ENCODE measurements at regions of chr3 and their contacts with region 1.

Region 1: DNA sequence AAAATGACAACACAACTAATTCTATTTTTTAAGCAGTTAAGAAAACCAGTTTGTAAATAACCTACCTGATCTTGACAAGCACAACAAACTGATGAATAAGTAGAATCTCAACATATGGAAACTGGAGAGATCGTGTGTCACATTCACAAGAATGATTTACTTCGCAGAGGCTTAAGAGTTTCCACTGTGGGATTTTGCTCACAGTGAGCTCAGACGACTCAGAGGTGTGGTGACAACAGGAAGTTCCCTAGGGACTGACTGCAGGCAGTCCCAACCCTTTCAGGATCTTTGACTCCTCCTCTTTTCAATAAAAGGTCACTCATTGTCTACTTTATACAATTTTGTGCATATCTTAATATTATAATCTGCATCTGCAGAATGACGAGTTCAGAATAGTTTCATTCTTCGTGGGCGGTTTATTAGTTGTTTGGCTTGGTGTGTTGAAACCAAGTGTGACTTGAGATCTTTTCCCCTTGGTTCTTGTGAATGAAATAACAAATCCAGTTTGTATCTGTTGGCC is at the start of gene LIPH:
- DNase-seq: no peak
- ATAC-seq: peak in 1 of 8 donors; percentile 34
- H3K4me3 ChIP-seq: peak within 1 kb of the TSS in 5 of 10 donors; percentile 0 to 30 (median 23)
- H3K27ac ChIP-seq: peak within 1 kb of the TSS in 2 of 10 donors; percentile 0 to 1
- H3K4me1 ChIP-seq: peaks cover 0 to 5% (median 0%) of the 10 kb centered on the region in 9 donors
- H3K27me3 ChIP-seq: no peaks in the 10 kb centered on the region
- CTCF ChIP-seq: no peak
- total RNA-seq, gene LIPH: 0.12 to 1.7 (median 0.42) TPM

Region 2: GRCh38 chr3:185353823-185354614 is 198.4 kb before region 1 on chr3:
- intact Hi-C with region 1: loop called in 3 of 10 experiments (anchors 10 kb)
- DNase-seq: peak; percentile 24 to 39
- ATAC-seq: peak; percentile 52 to 86 (median 76)
- H3K4me3 ChIP-seq: no peak overlapping the region
- H3K27ac ChIP-seq: no peak overlapping the region
- H3K4me1 ChIP-seq: no peaks in the 10 kb centered on the region
- H3K27me3 ChIP-seq: no peaks in the 10 kb centered on the region
- CTCF ChIP-seq: peak; percentile 38 to 69 (median 58)

Region 3: GRCh38 chr3:185362850-185363661 is 189.4 kb before region 1 on chr3 and contains the start of gene MAP3K13:
- intact Hi-C with region 1: loop called in 4 of 10 experiments (anchors 10 kb)
- DNase-seq: peak; percentile 62 to 87
- ATAC-seq: peak; percentile 96 to 100 (median 100)
- H3K4me3 ChIP-seq: peak within 1 kb of the TSS; percentile 48 to 72 (median 64)
- H3K27ac ChIP-seq: peak within 1 kb of the TSS in 9 of 10 donors; percentile 46 to 70 (median 61)
- H3K4me1 ChIP-seq: peaks cover 0 to 14% (median 9%) of the 10 kb centered on the region in 9 donors
- H3K27me3 ChIP-seq: peaks cover 0 to 27% (median 0%) of the 10 kb centered on the region in 7 donors
- CTCF ChIP-seq: no peak
- total RNA-seq, gene MAP3K13: 7.1 to 14.9 (median 11.3) TPM

Region 4: DNA sequence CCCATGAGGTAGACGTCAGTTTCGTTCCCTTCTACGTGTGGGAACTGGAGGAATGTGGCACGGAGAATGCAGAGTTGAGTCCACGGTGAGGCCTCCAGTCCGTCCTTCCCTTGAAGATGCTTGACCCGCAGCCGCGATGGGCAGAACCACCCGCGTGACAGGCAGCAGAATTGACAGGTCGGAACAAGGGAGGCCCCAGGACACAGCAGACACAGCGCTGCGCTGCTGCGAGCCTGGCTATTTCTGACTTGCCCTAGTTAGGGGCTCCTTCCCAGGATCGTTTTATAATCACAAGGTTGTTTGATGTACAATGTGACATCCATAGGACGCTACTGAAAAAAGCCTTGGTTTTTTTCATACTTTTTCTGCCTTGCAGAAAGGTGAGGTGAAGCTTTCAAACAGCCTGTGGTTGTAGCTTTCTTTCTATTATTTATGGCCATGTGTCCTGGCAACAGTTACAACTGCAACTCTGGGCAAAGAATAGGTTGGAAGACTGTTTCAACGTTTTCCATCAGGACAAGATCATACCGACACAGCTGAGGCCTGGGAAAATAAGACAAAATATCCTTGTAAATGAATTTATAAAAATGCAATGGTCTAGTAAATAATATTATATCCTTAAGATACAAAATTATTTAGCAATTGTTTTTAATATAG is 44.0 kb before region 1 on chr3:
- intact Hi-C with region 1: loop called in 2 of 10 experiments (anchors 5 to 10 kb)
- DNase-seq: peak; percentile 12 to 26
- ATAC-seq: peak in 7 of 8 donors; percentile 59 to 85 (median 67)
- H3K4me3 ChIP-seq: no peak overlapping the region
- H3K27ac ChIP-seq: peak overlapping the region in 1 of 10 donors; percentile 33
- H3K4me1 ChIP-seq: peaks cover 0 to 5% (median 0%) of the 10 kb centered on the region in 9 donors
- H3K27me3 ChIP-seq: no peaks in the 10 kb centered on the region
- CTCF ChIP-seq: no peak

Region 5: GRCh38 chr3:185912929-185913901 is 360.8 kb after region 1 on chr3:
- intact Hi-C with region 1: no loop called
- DNase-seq: no peak
- ATAC-seq: peak in 2 of 8 donors; percentile 25 to 27
- H3K4me3 ChIP-seq: no peak overlapping the region
- H3K27ac ChIP-seq: no peak overlapping the region
- H3K4me1 ChIP-seq: peaks cover 0 to 5% (median 0%) of the 10 kb centered on the region in 9 donors
- H3K27me3 ChIP-seq: no peaks in the 10 kb centered on the region
- CTCF ChIP-seq: no peak

Measured in heart right ventricle (tissue), 16 donors.